PC-3 (cell line): ENCODE measurements at regions of chrX and their contacts with region 1.

Region 1: DNA sequence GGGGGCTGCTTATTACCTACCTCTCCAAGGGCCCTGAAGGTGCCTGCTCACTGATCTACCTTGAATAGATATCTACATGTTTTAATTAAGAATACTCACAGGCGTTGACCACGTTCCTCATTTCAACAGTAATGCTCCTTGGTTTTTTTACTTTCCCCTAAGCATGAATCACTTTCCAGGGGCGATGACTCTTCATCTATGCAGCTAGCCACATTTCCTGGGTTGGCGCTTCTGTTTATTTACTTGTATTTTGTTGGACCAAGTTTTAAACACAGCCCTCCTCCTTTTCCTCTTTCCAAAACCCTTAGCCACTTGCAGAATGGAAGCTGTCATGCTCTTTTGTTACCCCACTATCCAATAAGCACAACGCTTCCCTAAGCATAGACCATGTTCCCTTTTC is 50.8 kb downstream of the CBLL2 start:
- DNase-seq: peak; percentile 79
- ATAC-seq: peak; percentile 98
- H3K4me3 ChIP-seq: no peak overlapping the region
- H3K27ac ChIP-seq: peak overlapping the region; percentile 61
- H3K4me1 ChIP-seq: peaks cover 17% of the 10 kb centered on the region
- H3K27me3 ChIP-seq: no peaks in the 10 kb centered on the region
- CTCF ChIP-seq: no peak

Region 2: DNA sequence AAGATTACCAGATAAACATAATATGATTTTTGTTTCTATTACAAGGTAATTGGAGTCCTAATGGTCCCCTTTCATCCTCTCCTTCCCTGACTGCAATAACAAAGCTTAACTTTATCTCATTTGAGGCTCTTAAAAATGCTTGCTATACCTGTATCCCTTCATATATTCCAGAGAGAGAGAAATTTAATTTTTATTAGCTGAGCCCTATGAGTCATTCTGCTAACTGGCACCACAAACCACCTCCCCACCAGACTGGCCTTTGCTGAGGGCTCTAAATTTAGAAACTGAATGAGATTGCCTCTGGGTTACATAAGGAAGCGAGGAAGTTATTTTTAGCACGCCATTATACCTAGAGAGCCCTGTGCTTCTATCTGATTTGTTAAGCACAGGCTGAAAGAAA is 23.4 kb before region 1 on chrX:
- CTCF ChIA-PET with region 1: no interaction called
- POLR2A ChIA-PET with region 1: interaction called, 6 read pairs
- intact Hi-C with region 1: loop called (anchors 1 kb)
- DNase-seq: peak; percentile 75
- ATAC-seq: peak; percentile 95
- H3K4me3 ChIP-seq: peak overlapping the region; percentile 46; the same call in 1 of the 2 replicates
- H3K27ac ChIP-seq: peak overlapping the region; percentile 38
- H3K4me1 ChIP-seq: peaks cover 17% of the 10 kb centered on the region
- H3K27me3 ChIP-seq: no peaks in the 10 kb centered on the region
- CTCF ChIP-seq: no peak